ENCODE measurements at regions of chr11 and their contacts with region 1.

Region 1: GRCh38 chr11:117946842-117947526 is 17.8 kb upstream of the TMPRSS13 start:
- DNase-seq: peak; percentile 91
- ATAC-seq: peak; percentile 50
- H3K4me3 Mint-ChIP-seq: no peak overlapping the region
- H3K27ac Mint-ChIP-seq: peak overlapping the region; percentile 41
- H3K4me1 Mint-ChIP-seq: peaks cover 79% of the 10 kb centered on the region
- H3K27me3 Mint-ChIP-seq: no peaks in the 10 kb centered on the region
- CTCF ChIP-seq: peak; percentile 95

Region 2: GRCh38 chr11:117597071-117597470 is 349.9 kb before region 1 on chr11:
- CTCF ChIA-PET with region 1: no interaction called
- POLR2A ChIA-PET with region 1: no interaction called
- intact Hi-C with region 1: no loop called
- DNase-seq: peak; percentile 76
- ATAC-seq: no peak
- H3K4me3 Mint-ChIP-seq: no peak overlapping the region
- H3K27ac Mint-ChIP-seq: no peak overlapping the region
- H3K4me1 Mint-ChIP-seq: no peaks in the 10 kb centered on the region
- H3K27me3 Mint-ChIP-seq: peaks cover 6% of the 10 kb centered on the region
- CTCF ChIP-seq: no peak

Region 3: GRCh38 chr11:117817368-117818040 is 129.5 kb before region 1 on chr11:
- CTCF ChIA-PET with region 1: interaction called, 188 read pairs
- POLR2A ChIA-PET with region 1: interaction called, 10 read pairs
- intact Hi-C with region 1: loop called (anchors 5 kb)
- DNase-seq: peak; percentile 94
- ATAC-seq: peak; percentile 53
- H3K4me3 Mint-ChIP-seq: peak overlapping the region; percentile 63
- H3K27ac Mint-ChIP-seq: peak overlapping the region; percentile 98
- H3K4me1 Mint-ChIP-seq: peaks cover 72% of the 10 kb centered on the region
- H3K27me3 Mint-ChIP-seq: no peaks in the 10 kb centered on the region
- CTCF ChIP-seq: peak; percentile 99

Region 4: DNA sequence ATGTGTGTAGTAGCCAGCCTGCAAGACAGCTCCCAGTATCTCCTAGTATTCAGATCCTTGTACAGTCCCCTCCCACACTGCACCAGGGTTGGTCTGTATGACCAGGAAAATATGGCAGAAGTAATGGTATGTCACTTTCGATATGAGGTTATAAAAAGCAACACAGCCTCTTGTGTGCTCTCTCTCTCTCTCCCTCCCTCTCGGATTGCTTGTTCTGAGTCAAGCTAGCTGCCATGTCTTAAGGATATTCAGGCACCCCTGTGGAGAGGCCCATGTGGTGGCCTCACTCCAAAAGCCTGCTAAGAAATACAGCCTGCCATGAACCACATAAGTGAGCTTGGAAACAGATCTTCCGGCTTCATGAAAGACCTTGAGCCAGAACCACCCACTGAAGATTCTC is 95.9 kb before region 1 on chr11:
- CTCF ChIA-PET with region 1: interaction called, 205 read pairs
- POLR2A ChIA-PET with region 1: interaction called, 4 read pairs
- intact Hi-C with region 1: no loop called
- DNase-seq: no peak
- ATAC-seq: no peak
- H3K4me3 Mint-ChIP-seq: no peak overlapping the region
- H3K27ac Mint-ChIP-seq: no peak overlapping the region
- H3K4me1 Mint-ChIP-seq: peaks cover 14% of the 10 kb centered on the region
- H3K27me3 Mint-ChIP-seq: no peaks in the 10 kb centered on the region
- CTCF ChIP-seq: no peak

Region 5: DNA sequence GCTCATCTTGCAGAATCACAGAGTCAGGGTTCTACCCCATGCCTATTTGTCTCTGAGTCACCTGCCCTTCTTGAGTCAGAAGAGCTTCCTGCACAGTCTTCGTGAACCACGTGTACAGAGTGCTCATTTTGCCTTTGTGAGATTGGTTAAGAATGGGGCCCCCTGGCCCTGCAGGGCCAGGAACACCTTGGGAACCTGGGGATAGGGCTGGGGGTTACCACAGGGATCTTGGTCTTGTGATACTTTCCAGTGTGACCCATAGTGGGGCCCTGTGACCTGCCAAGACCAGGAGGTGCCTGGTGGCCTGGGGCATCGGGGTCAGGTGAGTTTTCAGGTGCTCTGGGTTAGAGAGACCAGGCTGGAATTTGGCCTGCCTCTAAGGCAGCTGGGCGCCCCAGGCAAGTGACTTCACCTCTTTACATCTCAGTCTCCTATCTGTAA is 27.2 kb before region 1 on chr11:
- CTCF ChIA-PET with region 1: interaction called, 25 read pairs
- POLR2A ChIA-PET with region 1: interaction called, 3 read pairs
- intact Hi-C with region 1: no loop called
- DNase-seq: peak; percentile 41
- ATAC-seq: peak; percentile 98
- H3K4me3 Mint-ChIP-seq: no peak overlapping the region
- H3K27ac Mint-ChIP-seq: peak overlapping the region; percentile 34
- H3K4me1 Mint-ChIP-seq: peaks cover 11% of the 10 kb centered on the region
- H3K27me3 Mint-ChIP-seq: no peaks in the 10 kb centered on the region
- CTCF ChIP-seq: no peak

Region 6: GRCh38 chr11:117970400-117971024 is 23.5 kb after region 1 on chr11:
- CTCF ChIA-PET with region 1: interaction called, 386 read pairs
- POLR2A ChIA-PET with region 1: interaction called, 87 read pairs
- intact Hi-C with region 1: no loop called
- DNase-seq: peak; percentile 58
- ATAC-seq: peak; percentile 29
- H3K4me3 Mint-ChIP-seq: no peak overlapping the region
- H3K27ac Mint-ChIP-seq: peak overlapping the region; percentile 82
- H3K4me1 Mint-ChIP-seq: peaks cover 64% of the 10 kb centered on the region
- H3K27me3 Mint-ChIP-seq: no peaks in the 10 kb centered on the region
- CTCF ChIP-seq: no peak

Region 7: GRCh38 chr11:117993988-117994745 is 47.2 kb after region 1 on chr11:
- CTCF ChIA-PET with region 1: interaction called, 386 read pairs
- POLR2A ChIA-PET with region 1: interaction called, 71 read pairs
- intact Hi-C with region 1: loop called (anchors 5 kb)
- DNase-seq: peak; percentile 1
- ATAC-seq: no peak
- H3K4me3 Mint-ChIP-seq: no peak overlapping the region
- H3K27ac Mint-ChIP-seq: peak overlapping the region; percentile 65
- H3K4me1 Mint-ChIP-seq: peaks cover 89% of the 10 kb centered on the region
- H3K27me3 Mint-ChIP-seq: no peaks in the 10 kb centered on the region
- CTCF ChIP-seq: no peak

Region 8: GRCh38 chr11:118046051-118046963 is 99.3 kb after region 1 on chr11:
- CTCF ChIA-PET with region 1: interaction called, 287 read pairs
- POLR2A ChIA-PET with region 1: interaction called, 6 read pairs
- intact Hi-C with region 1: no loop called
- DNase-seq: peak; percentile 68
- ATAC-seq: peak; percentile 79
- H3K4me3 Mint-ChIP-seq: peak overlapping the region; percentile 52
- H3K27ac Mint-ChIP-seq: peak overlapping the region; percentile 92
- H3K4me1 Mint-ChIP-seq: peaks cover 89% of the 10 kb centered on the region
- H3K27me3 Mint-ChIP-seq: no peaks in the 10 kb centered on the region
- CTCF ChIP-seq: no peak

Region 9: GRCh38 chr11:118145285-118146227 is 198.6 kb after region 1 on chr11:
- CTCF ChIA-PET with region 1: no interaction called
- POLR2A ChIA-PET with region 1: no interaction called
- intact Hi-C with region 1: no loop called
- DNase-seq: peak; percentile 96
- ATAC-seq: peak; percentile 95
- H3K4me3 Mint-ChIP-seq: peak overlapping the region; percentile 76
- H3K27ac Mint-ChIP-seq: no peak overlapping the region
- H3K4me1 Mint-ChIP-seq: peaks cover 3% of the 10 kb centered on the region
- H3K27me3 Mint-ChIP-seq: peaks cover 42% of the 10 kb centered on the region
- CTCF ChIP-seq: peak; percentile 84

Measured in activated CD8-positive, alpha-beta T cell treated with anti-CD3 and anti-CD28 coated beads for 36 hours (primary cell).